Colonic mucosa (tissue), 4 donors: ENCODE measurements at regions of chr19 and their contacts with region 1.

Region 1: DNA sequence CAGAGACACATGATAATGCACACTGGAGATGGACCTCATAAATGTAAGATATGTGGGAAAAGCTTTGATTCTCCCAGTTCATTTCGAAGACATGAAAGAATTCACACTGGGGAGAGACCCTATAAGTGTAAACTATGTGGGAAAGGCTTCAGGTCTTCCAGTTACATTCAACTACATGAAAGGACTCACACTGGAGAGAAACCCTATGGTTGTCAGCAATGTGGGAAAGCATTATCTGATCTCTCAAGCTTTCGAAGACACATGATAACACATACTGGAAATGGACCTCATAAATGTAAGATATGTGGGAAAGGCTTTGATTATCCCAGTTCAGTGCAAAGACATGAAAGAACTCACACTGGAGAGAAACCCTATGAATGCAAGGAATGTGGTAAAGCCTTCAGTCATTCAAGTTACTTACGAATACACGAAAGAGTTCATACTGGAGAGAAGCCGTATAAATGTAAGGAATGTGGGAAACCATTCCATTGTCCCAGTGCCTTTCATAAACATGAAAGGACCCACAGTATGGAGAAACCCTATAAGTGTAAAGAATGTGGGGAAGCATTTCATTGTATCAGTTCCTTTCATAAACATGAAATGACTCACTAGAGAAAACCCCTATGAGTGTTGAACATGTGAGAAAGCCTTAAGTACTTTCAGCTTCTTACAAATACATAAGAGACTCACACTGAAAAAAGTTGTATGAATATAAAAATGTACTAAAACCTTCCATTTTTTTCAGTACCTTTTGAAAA is 14.7 kb downstream of the ZNF441 start:
- DNase-seq: no peak
- H3K4me3 ChIP-seq: no peak overlapping the region
- H3K27ac ChIP-seq: no peak overlapping the region
- H3K4me1 ChIP-seq: no peaks in the 10 kb centered on the region
- H3K27me3 ChIP-seq: no peaks in the 10 kb centered on the region
- CTCF ChIP-seq: no peak

Region 2: DNA sequence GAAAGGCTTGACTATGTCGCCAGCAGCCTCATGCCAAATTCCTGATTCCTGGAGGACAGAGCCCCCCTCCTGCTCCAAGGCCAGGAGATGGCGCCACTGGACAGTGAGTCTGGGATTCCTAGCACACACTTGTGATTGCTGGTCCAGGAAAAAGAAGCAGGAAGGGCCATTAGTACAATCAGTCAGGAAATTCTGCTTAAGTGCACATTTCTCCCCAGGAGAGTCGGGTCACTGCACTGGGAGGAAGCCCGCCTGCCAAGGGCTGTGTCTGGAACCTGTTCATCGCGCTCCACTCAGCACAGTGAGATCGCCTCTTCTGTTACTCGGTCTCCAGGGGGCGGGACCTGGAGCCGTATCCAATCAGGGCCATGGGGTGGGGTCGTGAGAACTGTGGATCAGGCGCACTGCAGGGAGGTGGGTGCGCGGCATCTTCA is 107.8 kb before region 1 on chr19:
- intact Hi-C with region 1: loop called (anchors 10 kb)
- DNase-seq: peak; percentile 72
- H3K4me3 ChIP-seq: peak overlapping the region; percentile 30
- H3K27ac ChIP-seq: no peak overlapping the region
- H3K4me1 ChIP-seq: no peaks in the 10 kb centered on the region
- H3K27me3 ChIP-seq: no peaks in the 10 kb centered on the region
- CTCF ChIP-seq: peak; percentile 67

Region 3: DNA sequence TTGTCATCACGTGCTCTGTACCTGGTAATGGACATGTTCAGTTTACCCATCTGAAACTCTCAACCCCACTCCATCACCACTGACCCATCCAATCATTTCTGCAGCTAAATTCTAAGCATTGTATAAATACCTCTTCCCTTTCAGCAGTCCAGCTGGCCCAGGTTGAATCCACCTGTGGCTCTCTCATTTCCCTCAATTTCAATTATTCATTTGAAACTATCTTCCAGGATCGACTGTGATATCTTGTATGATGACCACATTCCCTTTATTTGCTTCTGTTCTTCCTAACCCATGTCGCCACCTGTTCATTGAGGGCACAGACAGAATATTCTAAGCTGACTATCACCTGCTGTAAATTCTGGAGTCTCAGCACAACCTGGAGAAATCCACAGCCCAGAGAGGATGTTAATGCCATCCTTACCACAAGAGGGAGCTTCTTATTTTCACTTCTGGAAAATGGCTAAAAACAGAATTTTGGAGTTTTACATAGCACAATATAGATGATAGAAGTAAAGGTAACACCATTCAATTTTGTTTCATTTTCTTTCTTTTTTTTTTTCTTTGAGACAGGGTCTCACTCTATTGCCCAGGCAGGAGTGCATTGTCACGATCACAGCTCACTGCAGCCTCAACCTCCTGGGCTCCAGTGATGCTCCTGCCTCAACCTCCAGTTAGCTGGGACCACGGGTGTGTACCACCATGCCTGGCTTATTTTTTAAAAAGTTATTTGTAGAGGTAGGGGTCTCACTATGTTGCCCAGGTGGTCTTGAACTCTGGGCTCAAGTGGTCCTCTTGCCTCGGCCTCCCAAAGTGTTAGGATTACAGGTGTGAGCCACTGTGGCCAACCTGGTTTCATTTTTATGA is 81.3 kb before region 1 on chr19:
- intact Hi-C with region 1: loop called (anchors 10 kb)
- DNase-seq: peak; percentile 20
- H3K4me3 ChIP-seq: no peak overlapping the region
- H3K27ac ChIP-seq: no peak overlapping the region
- H3K4me1 ChIP-seq: no peaks in the 10 kb centered on the region
- H3K27me3 ChIP-seq: no peaks in the 10 kb centered on the region
- CTCF ChIP-seq: peak; percentile 78

Region 4: DNA sequence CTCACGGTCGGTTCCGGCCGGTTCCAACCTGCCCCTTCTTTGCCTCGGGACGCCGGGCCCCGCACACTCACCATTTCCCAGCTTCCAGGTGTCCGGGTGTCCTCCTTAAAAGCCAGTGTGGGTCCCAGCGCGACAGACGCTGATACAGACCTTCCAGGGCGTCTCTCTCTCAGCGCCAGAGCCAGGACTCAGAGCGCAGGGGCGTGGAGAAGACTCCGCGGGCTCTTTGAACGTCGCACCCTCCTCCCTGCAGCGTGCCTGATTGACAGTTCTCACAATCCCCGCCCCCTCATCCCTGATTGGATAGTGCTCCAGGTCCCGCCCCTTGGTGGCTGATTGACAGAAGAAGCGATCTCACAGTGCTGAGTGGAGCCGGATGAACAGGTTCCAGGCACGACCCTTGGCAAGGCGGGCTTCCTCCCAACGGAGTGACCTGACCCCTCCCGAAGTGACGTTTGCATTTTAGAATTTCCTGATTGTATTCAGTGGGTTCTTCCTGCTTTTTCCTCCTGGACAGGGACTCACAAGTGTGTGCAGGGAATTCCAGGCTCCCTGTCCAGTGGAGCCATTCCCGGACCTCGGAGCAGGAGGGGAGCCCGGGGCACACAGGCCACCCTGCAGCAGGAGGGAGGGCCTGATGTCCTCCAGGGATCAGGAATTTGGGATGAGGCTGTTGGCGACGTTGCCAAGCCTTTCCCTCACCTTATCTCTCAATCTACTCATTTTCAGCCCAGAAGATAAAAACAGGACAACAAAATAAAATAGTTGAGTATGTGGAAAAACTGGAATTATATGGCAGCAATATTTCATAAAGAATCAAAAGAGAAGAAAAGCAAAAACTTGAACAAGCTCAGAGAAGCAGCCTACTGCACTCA is 42.5 kb before region 1 on chr19 and contains the start of gene ZNF823:
- intact Hi-C with region 1: no loop called
- DNase-seq: peak; percentile 100
- H3K4me3 ChIP-seq: peak within 1 kb of the TSS; percentile 98
- H3K27ac ChIP-seq: peak within 1 kb of the TSS; percentile 91
- H3K4me1 ChIP-seq: peaks cover 5% of the 10 kb centered on the region
- H3K27me3 ChIP-seq: no peaks in the 10 kb centered on the region
- CTCF ChIP-seq: no peak
- total RNA-seq, gene ZNF823: 10.7 to 13.1 TPM